Prostate gland (tissue), 2 donors: ENCODE measurements at regions of chr10 and their contacts with region 1.

Region 1: GRCh38 chr10:92517034-92517655 is 56.7 kb downstream of the IDE start:
- DNase-seq: peak; percentile 69
- H3K4me3 ChIP-seq: no peak overlapping the region
- H3K27ac ChIP-seq: no peak overlapping the region
- H3K4me1 ChIP-seq: no peaks in the 10 kb centered on the region
- H3K27me3 ChIP-seq: no peaks in the 10 kb centered on the region
- CTCF ChIP-seq: peak; percentile 63 to 83 (median 78)
- POLR2A ChIP-seq: no peak

Region 2: DNA sequence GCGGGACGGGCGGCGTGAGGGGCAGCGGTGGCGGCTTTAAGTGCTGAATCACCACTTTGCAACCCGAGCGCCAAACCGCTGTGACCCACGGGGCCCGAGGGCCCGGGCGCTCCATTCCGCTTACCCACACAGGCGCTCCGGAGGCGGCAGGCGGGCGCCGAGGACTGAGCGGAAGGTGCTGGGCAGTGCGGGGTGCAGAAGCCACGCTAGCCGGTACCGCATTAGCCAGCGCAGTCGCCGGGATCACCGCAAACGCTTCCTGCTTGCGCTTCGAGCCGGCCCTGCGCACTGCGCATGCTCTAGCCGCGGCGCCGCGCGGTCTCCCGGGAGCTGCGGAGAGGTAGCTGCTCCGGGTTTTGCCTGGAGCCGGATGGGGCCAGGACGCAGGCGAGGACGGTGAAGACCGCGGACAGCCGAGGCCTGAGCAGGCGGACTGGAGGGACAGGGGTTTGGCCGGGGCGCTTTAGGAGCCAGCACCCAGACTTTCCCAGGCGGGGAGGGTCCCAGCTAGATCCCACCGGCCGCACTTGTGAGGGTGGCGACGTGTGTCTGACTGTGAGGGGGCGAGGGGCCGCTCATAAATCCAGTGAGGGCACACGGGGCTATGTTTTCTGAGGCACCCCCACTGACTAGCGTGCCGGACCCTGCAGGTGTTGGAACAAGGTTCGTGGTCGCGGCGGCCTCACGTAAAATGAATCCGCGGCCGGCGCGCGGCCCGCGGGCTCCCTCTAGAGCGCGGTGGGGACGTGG is 56.8 kb after region 1 on chr10 and contains the start of gene IDE:
- intact Hi-C with region 1: loop called (anchors 2 kb)
- DNase-seq: peak; percentile 84
- H3K4me3 ChIP-seq: peak within 1 kb of the TSS; percentile 81 to 88
- H3K27ac ChIP-seq: peak within 1 kb of the TSS; percentile 94 to 97
- H3K4me1 ChIP-seq: no peaks in the 10 kb centered on the region
- H3K27me3 ChIP-seq: no peaks in the 10 kb centered on the region
- CTCF ChIP-seq: peak; percentile 61 to 83 (median 73)
- POLR2A ChIP-seq: peak; percentile 35
- total RNA-seq, gene IDE: 23.7 to 38.0 TPM

Region 3: DNA sequence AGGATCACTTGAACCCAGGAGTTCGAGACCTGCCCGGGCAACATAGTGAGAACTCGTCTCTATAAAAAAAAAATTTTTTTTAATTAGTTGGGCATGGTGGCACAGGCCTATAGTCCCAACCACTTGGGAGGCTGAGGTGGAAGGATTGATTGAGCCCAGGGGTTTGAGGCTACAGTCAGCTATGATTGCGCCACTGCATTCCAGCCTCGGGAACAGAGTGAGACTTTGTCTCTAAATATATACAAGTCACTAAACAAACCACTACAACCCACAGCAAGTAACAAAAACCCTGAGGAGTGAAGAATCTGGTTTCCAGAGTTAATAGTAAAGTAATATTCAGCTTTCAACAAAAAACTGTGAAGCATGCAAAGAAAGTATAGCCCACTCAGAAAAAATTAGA is 139.9 kb after region 1 on chr10:
- intact Hi-C with region 1: no loop called
- DNase-seq: no peak
- H3K4me3 ChIP-seq: no peak overlapping the region
- H3K27ac ChIP-seq: no peak overlapping the region
- H3K4me1 ChIP-seq: no peaks in the 10 kb centered on the region
- H3K27me3 ChIP-seq: no peaks in the 10 kb centered on the region
- CTCF ChIP-seq: no peak
- POLR2A ChIP-seq: no peak

Region 4: GRCh38 chr10:92699518-92700381 is 182.6 kb after region 1 on chr10:
- intact Hi-C with region 1: no loop called
- DNase-seq: no peak
- H3K4me3 ChIP-seq: peak overlapping the region; percentile 18 to 25
- H3K27ac ChIP-seq: no peak overlapping the region
- H3K4me1 ChIP-seq: no peaks in the 10 kb centered on the region
- H3K27me3 ChIP-seq: no peaks in the 10 kb centered on the region
- CTCF ChIP-seq: no peak
- POLR2A ChIP-seq: no peak